ENCODE measurements at regions of chr1 and their contacts with region 1.

Region 1: GRCh38 chr1:24321697-24322469 is 2.7 kb downstream of the GRHL3 start:
- DNase-seq: peak; percentile 83 to 86
- H3K4me3 ChIP-seq: peak overlapping the region; percentile 59
- H3K27ac ChIP-seq: peak overlapping the region; percentile 98
- H3K4me1 ChIP-seq: peaks cover 54% of the 10 kb centered on the region
- H3K27me3 ChIP-seq: no peaks in the 10 kb centered on the region
- CTCF ChIP-seq: no peak

Region 2: DNA sequence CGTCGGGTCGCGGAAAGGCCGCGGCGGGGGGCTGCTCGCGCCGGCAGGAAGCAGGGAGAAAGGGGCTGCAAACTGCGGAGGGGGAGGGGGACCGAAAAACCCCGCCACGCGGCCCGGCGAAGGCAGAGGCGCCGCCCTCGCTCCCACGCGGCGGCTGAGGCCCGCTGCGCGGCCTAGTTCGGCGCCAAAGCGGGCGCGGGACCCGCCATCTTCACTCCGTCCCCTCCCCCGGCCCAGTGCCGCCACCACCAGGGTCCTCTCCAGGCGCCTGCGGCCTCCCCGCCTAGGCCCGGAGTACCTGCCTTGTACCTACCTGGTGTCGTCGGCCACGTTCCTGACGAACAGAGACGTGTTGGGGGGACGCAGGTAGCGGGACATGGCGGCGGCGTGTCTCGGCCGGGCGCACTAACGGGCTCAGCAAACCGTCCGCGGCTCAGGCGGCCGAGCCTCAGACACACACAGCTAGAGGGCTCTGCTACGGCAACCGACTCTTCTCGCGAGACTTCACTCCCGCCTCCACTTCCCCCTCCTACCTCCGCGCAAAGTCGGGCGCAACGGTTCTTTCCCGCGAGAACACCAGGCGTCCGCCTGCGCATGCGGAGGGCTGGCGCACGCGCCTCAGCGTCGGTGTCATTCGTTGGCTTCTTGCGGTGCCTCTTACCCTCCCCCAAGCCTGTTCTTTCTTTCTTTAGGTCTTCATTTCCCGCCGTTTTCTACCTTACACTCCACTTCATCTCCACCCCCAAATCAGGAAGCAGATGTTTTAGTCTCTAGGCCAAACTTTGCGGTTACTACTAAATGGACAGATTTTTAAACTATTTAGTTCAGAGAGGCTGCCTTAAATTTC is 341.8 kb before region 1 on chr1 and contains the start of gene SRSF10:
- CTCF ChIA-PET with region 1: no interaction called
- POLR2A ChIA-PET with region 1: no interaction called
- intact Hi-C with region 1: no loop called
- DNase-seq: peak; percentile 88 to 96
- H3K4me3 ChIP-seq: peak within 1 kb of the TSS; percentile 94
- H3K27ac ChIP-seq: peak within 1 kb of the TSS; percentile 97
- H3K4me1 ChIP-seq: peaks cover 45% of the 10 kb centered on the region
- H3K27me3 ChIP-seq: no peaks in the 10 kb centered on the region
- CTCF ChIP-seq: no peak
- total RNA-seq, gene SRSF10: 77.3 and 96.2 TPM in 2 replicates

Region 3: DNA sequence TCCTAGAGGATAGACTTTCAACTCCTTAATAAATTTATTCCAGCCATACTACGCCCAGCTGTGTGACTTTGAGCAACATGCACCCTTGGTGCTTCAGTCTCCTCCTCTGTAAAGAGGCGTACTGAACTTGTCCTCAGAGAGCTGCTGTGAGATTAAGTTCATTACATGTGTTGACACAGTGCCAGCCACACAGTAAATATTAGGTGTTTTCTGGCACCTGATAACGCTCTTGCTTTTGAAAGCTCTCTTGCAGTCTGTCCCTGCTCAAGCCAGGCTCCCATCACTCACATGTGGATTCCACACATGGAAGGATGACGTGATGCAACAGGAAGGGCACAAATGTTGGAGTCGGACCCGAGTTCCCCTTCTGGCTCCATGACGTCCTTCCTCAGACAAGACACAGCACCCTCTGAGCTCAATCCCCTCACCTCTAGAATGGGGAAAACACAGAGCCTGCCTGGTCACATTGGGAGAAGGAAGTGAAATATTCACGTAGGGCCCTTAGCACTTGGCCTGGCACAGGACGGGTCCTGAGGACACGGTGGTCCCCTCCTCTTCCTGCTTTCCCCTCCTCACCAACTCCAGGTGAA is 142.5 kb before region 1 on chr1:
- CTCF ChIA-PET with region 1: no interaction called
- POLR2A ChIA-PET with region 1: interaction called, 15 read pairs
- intact Hi-C with region 1: no loop called
- DNase-seq: no peak
- H3K4me3 ChIP-seq: no peak overlapping the region
- H3K27ac ChIP-seq: no peak overlapping the region
- H3K4me1 ChIP-seq: peaks cover 11% of the 10 kb centered on the region; the same call in 1 of the 2 replicates
- H3K27me3 ChIP-seq: no peaks in the 10 kb centered on the region
- CTCF ChIP-seq: no peak

Region 4: DNA sequence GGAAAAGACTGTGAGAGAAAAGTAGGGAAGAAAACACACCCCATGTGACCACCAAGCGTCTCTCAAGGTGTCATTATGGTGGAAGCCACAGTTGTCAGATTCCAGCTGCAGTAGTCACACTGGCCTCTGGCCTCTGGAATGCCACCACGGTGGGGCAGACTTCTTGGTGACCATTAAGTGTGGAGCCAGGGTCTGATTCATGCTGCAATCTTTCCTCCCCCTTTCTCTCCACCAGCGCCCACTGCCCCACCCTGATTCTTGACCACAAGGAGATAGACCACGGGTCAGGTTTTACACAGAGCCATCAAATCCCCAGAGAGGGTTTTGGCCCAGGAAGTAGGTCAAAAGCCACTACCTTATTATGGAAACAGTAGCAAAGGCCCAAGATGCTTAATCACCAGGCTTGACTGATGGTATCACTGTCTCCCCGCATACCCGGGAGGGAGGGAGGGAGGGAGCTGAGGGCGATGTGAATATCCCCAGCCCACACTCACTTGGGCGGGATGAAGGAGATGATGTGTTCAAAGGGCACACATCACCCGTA is 55.4 kb before region 1 on chr1:
- CTCF ChIA-PET with region 1: interaction called, 3 read pairs
- POLR2A ChIA-PET with region 1: no interaction called
- intact Hi-C with region 1: loop called (anchors 1 kb)
- DNase-seq: peak; percentile 94 to 98
- H3K4me3 ChIP-seq: no peak overlapping the region
- H3K27ac ChIP-seq: peak overlapping the region; percentile 78
- H3K4me1 ChIP-seq: peaks cover 50% of the 10 kb centered on the region
- H3K27me3 ChIP-seq: no peaks in the 10 kb centered on the region
- CTCF ChIP-seq: 0 out of 2 replicates have a peak, but pooled peaks have one; percentile 19

Region 5: DNA sequence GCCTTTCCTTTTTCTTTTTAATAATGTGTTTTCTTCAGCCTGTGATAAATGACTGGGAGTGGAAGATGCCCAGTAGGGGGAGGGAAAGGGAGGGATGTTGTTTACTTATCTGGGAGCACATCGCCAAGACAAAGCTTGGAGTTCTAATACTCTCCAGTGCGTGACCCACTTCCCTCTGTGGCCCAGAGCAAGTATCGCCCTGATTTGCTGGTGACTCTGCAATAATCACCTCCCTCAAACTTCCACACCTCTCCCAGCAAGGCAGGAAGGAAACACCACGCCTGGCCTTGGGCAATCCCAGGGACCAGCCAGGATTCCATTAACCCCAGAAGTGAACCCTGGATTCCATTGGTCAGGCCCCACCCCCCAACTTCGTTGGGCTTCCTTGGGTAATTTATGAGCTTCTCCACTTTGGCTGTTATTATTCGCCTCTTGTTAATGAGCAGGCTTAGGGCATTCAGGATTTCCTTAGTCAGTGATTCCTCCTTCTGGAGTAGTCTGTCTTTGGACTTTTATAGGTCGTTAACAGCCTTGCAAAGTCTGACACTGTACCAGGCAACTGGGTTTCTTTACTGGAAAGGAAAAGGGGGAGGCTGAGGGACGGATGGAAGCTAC is 27.0 kb before region 1 on chr1:
- CTCF ChIA-PET with region 1: no interaction called
- POLR2A ChIA-PET with region 1: no interaction called
- intact Hi-C with region 1: loop called (anchors 2 kb)
- DNase-seq: peak; percentile 79 to 94
- H3K4me3 ChIP-seq: peak overlapping the region; percentile 46; the same call in 1 of the 2 replicates
- H3K27ac ChIP-seq: peak overlapping the region; percentile 100
- H3K4me1 ChIP-seq: peaks cover 55% of the 10 kb centered on the region
- H3K27me3 ChIP-seq: no peaks in the 10 kb centered on the region
- CTCF ChIP-seq: 0 out of 2 replicates have a peak, but pooled peaks have one; percentile 25

Region 6: DNA sequence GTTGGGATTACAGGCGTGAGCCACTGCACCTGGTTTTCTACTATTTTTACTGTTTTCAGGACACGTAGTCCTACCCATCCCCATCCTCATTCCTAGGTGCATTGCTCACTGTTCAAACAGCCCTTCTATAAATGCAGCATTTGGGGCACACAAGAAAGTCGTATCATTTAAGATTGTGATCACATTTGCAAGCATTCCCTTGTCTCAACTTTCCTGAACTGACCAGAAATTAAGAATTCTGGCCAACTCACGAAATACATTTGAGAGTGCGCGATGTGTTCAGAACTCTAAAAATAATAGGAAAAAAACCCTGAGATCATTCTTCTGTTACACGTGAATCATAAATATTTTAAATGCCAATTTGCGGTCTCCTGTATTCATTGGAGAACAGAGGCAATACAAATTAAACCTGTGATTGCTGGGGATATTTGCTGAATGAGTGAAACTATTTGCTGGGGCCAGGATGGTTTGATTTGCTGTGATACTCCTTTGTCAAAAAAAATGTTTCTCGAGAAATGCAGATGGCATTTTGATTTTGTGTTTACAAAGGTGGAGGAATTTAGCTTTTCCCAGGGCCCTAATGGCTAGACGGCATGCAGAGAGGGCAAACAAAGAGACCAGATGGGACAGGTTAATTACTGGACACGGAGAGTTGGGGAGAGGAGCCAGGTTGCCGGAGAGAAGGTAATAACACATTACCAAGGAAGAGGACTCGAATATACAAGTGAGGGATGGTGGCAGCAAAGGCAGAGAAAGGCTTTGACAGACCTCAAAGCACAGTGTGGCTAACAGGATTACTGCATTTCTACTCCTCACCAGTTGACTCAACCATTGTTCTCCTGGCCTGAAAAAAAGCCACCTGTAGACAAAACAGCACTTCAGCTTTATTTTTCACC is 53.3 kb after region 1 on chr1:
- CTCF ChIA-PET with region 1: no interaction called
- POLR2A ChIA-PET with region 1: interaction called, 5 read pairs
- intact Hi-C with region 1: loop called (anchors 5 kb)
- DNase-seq: peak; percentile 51 to 92
- H3K4me3 ChIP-seq: peak overlapping the region; percentile 34; the same call in 1 of the 2 replicates
- H3K27ac ChIP-seq: peak overlapping the region; percentile 95
- H3K4me1 ChIP-seq: peaks cover 39% of the 10 kb centered on the region
- H3K27me3 ChIP-seq: no peaks in the 10 kb centered on the region
- CTCF ChIP-seq: no peak

Measured in PC-9 (cell line).